ENCODE measurements at regions of chr11 and their contacts with region 1.

Region 1: DNA sequence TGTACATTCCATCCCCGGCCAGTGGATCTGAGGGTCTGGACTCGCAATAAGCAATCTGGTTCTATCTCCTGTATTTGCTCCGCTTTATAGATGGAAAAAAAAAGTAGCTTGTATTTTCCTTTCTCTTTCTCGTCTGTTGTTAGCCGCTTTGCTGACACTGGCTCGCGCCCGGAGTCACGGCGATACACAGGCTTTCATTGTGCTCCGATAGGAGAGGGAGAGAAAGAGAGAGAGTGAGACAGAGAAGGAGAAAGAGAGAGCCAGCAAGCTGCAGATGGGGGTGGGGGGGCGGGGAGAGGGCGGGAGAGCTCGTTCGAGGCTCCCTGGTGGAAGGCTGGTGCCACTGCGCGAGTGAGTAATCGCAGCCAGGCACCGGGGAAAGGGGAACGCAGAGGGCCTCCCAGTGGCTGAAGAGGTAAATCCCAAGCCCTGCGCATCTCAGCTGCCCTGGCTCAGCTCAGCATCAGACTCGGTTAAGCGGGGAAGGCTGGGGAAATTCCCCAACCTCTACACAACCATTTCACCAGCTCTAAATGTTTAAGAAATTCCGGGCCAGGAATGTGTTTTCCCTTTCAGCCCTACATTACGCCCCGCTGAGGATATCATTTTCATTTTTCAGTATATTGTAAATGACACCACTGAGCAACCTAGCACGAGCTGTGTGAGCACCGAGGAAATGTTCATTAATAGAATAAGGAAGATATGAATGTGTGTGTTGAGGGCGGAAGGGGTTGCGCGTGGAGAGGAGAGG is at the start of gene MAML2:
- DNase-seq: peak; percentile 98
- H3K4me3 ChIP-seq: peak within 1 kb of the TSS; percentile 55 to 84 (median 72)
- H3K27ac ChIP-seq: peak within 1 kb of the TSS; percentile 71 to 90 (median 84)
- H3K4me1 ChIP-seq: peaks cover 22 to 52% (median 38%) of the 10 kb centered on the region in 6 donors
- H3K27me3 ChIP-seq: no peaks in the 10 kb centered on the region
- CTCF ChIP-seq: peak; percentile 88 to 99 (median 97)
- POLR2A ChIP-seq: peak in 1 of 3 donors; percentile 2
- total RNA-seq, gene MAML2: 20.8 to 43.4 (median 34.2) TPM

Region 2: GRCh38 chr11:96054870-96055705 is 288.0 kb before region 1 on chr11:
- intact Hi-C with region 1: loop called (anchors 5 kb)
- DNase-seq: no peak
- H3K4me3 ChIP-seq: no peak overlapping the region
- H3K27ac ChIP-seq: peak overlapping the region in 5 of 8 donors; percentile 1 to 47 (median 24)
- H3K4me1 ChIP-seq: peaks cover 5 to 48% (median 16%) of the 10 kb centered on the region in 6 donors
- H3K27me3 ChIP-seq: no peaks in the 10 kb centered on the region
- CTCF ChIP-seq: peak; percentile 26 to 73 (median 59)
- POLR2A ChIP-seq: no peak

Region 3: DNA sequence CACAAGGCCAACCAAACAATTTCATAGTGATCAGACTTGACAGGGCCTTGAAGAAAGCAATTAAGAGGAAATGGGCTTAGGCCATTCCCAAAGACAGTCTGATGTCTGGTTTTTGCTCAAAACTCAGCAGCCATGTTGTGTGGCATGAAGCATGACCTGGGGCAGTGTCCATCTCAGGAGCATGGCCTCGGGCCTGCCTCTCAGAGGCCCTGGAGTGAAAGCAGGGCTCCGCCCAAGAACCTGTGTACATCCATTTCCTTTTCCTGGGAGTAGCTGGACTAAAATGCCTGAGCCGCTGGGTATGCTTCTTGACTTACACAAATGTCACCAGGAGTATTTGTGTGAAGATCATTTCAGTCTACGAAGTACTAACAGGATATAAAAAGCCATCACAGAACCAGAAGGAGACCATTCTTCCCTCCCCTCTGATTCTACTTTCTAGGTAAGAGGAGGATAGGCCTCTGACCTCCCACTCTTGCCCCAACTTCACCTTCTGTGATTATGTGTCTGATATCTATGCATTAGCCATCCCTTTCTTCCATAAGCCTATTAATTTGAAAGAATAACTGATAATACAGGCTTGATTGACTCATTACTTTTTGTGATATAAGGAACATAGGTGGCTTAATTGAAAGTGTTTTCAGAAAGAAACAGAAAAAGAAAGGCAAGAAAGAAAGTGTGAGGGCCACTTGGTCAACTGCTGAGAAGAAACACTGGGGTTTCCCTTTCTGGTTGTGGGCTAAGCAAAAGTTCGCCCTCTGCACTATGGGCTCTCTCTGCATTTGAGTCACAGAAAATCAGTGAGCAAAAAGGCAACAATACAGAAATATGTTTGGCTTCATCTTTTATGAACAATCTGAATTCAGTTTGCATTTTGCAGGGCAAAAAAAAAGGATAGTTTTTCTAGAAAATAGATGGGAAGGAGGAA is 230.7 kb before region 1 on chr11:
- intact Hi-C with region 1: no loop called
- DNase-seq: no peak
- H3K4me3 ChIP-seq: no peak overlapping the region
- H3K27ac ChIP-seq: peak overlapping the region in 5 of 8 donors; percentile 3 to 45 (median 28)
- H3K4me1 ChIP-seq: peaks cover 0 to 22% (median 0%) of the 10 kb centered on the region in 6 donors
- H3K27me3 ChIP-seq: no peaks in the 10 kb centered on the region
- CTCF ChIP-seq: no peak
- POLR2A ChIP-seq: no peak

Region 4: GRCh38 chr11:96272529-96273222 is 70.5 kb before region 1 on chr11:
- intact Hi-C with region 1: loop called (anchors 10 kb)
- DNase-seq: no peak
- H3K4me3 ChIP-seq: no peak overlapping the region
- H3K27ac ChIP-seq: peak overlapping the region in 3 of 8 donors; percentile 1 to 13 (median 3)
- H3K4me1 ChIP-seq: peaks cover 8 to 50% (median 27%) of the 10 kb centered on the region in 6 donors
- H3K27me3 ChIP-seq: no peaks in the 10 kb centered on the region
- CTCF ChIP-seq: no peak
- POLR2A ChIP-seq: no peak

Measured in spleen (tissue), 13 donors.